Activated B cell treated with CpG ODN at 0.5 μM for 24 hours (primary cell): ENCODE measurements at regions of chr18 and their contacts with region 1.

Region 1: DNA sequence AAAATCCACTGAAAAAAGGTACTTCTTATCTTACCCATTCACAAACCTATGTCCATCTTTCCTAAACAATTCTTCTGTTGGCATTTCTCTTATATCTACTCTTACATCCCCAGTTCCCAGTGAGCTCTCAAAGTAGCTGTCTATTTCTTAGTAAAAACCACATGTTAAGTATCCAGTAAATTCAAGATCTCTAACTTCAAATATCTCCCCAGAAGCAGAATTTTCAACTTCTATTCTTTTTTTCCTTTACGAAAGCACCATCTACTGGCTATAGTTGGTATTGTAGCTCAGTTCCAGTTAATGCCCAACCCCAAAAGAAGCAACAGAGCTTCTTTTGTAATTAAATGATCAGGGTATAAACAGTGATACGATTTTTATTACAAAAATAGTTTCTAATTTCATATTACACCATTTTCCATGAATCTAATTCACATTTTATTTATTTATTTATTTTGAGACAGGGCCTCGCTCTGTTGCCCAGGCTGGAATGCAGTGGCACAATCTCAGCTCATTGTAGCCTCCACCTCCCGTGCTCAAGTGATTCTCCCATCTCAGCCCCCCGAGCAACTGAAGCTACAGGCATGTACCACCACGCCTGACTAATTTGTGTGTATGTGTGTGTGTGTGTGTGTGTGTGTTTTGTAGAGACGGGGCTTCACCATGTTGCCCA is 28.5 kb downstream of the HRH4 start:
- DNase-seq: no peak
- ATAC-seq: peak; percentile 49
- H3K4me3 Mint-ChIP-seq: no peak overlapping the region
- H3K27ac Mint-ChIP-seq: no peak overlapping the region
- H3K4me1 Mint-ChIP-seq: peaks cover 29% of the 10 kb centered on the region
- H3K27me3 Mint-ChIP-seq: peaks cover 9% of the 10 kb centered on the region
- CTCF ChIP-seq: peak; percentile 51

Region 2: DNA sequence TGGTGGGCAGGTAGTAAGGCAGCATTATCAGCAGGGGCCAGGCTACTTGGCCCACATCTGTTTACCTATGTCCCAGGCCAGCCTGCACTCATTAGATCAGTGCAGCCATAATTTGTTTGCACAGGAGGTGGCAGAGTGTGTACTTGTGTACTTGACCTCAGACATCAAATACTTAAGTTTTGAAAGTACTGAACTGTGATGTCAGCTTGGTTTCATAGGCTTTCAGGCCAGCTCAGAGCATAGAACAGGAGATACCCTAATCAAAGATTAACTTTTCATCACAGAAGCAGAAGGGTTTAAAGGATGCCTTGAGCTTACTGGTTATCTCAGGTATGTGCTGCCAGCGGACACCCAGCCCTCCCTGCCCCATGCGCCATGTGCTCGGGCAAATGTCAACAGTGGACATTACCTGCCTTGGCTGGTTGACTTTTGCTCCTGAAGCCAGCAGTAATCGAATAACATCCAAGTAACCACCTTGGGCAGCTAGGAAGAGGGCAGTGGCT is 859.5 kb before region 1 on chr18:
- CTCF ChIA-PET with region 1: no interaction called
- POLR2A ChIA-PET with region 1: no interaction called
- intact Hi-C with region 1: loop called (anchors 10 kb)
- DNase-seq: no peak
- ATAC-seq: no peak
- H3K4me3 Mint-ChIP-seq: no peak overlapping the region
- H3K27ac Mint-ChIP-seq: no peak overlapping the region
- H3K4me1 Mint-ChIP-seq: no peaks in the 10 kb centered on the region
- H3K27me3 Mint-ChIP-seq: peaks cover 3% of the 10 kb centered on the region
- CTCF ChIP-seq: no peak

Region 3: GRCh38 chr18:24362758-24363157 is 126.2 kb before region 1 on chr18:
- CTCF ChIA-PET with region 1: interaction called, 110 read pairs
- POLR2A ChIA-PET with region 1: no interaction called
- intact Hi-C with region 1: loop called (anchors 1 kb)
- DNase-seq: no peak
- ATAC-seq: no peak
- H3K4me3 Mint-ChIP-seq: no peak overlapping the region
- H3K27ac Mint-ChIP-seq: no peak overlapping the region
- H3K4me1 Mint-ChIP-seq: no peaks in the 10 kb centered on the region
- H3K27me3 Mint-ChIP-seq: peaks cover 2% of the 10 kb centered on the region
- CTCF ChIP-seq: no peak

Region 4: GRCh38 chr18:24462838-24463775 is 25.9 kb before region 1 on chr18:
- CTCF ChIA-PET with region 1: no interaction called
- POLR2A ChIA-PET with region 1: no interaction called
- intact Hi-C with region 1: no loop called
- DNase-seq: no peak
- ATAC-seq: no peak
- H3K4me3 Mint-ChIP-seq: no peak overlapping the region
- H3K27ac Mint-ChIP-seq: no peak overlapping the region
- H3K4me1 Mint-ChIP-seq: no peaks in the 10 kb centered on the region
- H3K27me3 Mint-ChIP-seq: peaks cover 7% of the 10 kb centered on the region
- CTCF ChIP-seq: no peak

Region 5: GRCh38 chr18:24726727-24727492 is 238.0 kb after region 1 on chr18:
- CTCF ChIA-PET with region 1: interaction called, 21 read pairs
- POLR2A ChIA-PET with region 1: interaction called, 3 read pairs
- intact Hi-C with region 1: loop called (anchors 1 kb)
- DNase-seq: no peak
- ATAC-seq: no peak
- H3K4me3 Mint-ChIP-seq: no peak overlapping the region
- H3K27ac Mint-ChIP-seq: no peak overlapping the region
- H3K4me1 Mint-ChIP-seq: peaks cover 2% of the 10 kb centered on the region
- H3K27me3 Mint-ChIP-seq: no peaks in the 10 kb centered on the region
- CTCF ChIP-seq: no peak

Region 6: GRCh38 chr18:25896178-25896780 is 1407.3 kb after region 1 on chr18:
- CTCF ChIA-PET with region 1: interaction called, 3 read pairs
- POLR2A ChIA-PET with region 1: no interaction called
- intact Hi-C with region 1: loop called (anchors 2 kb)
- DNase-seq: no peak
- ATAC-seq: peak; percentile 40
- H3K4me3 Mint-ChIP-seq: no peak overlapping the region
- H3K27ac Mint-ChIP-seq: no peak overlapping the region
- H3K4me1 Mint-ChIP-seq: no peaks in the 10 kb centered on the region
- H3K27me3 Mint-ChIP-seq: peaks cover 10% of the 10 kb centered on the region
- CTCF ChIP-seq: peak; percentile 64